ENCODE measurements at regions of chr1 and their contacts with region 1.

Region 1: GRCh38 chr1:19582302-19582701 is 61.8 kb upstream of the NBL1 start:
- DNase-seq: peak; percentile 89
- H3K4me3 Mint-ChIP-seq: no peak overlapping the region
- H3K27ac Mint-ChIP-seq: no peak overlapping the region
- H3K4me1 Mint-ChIP-seq: peaks cover 11% of the 10 kb centered on the region
- H3K27me3 Mint-ChIP-seq: no peaks in the 10 kb centered on the region

Region 2: DNA sequence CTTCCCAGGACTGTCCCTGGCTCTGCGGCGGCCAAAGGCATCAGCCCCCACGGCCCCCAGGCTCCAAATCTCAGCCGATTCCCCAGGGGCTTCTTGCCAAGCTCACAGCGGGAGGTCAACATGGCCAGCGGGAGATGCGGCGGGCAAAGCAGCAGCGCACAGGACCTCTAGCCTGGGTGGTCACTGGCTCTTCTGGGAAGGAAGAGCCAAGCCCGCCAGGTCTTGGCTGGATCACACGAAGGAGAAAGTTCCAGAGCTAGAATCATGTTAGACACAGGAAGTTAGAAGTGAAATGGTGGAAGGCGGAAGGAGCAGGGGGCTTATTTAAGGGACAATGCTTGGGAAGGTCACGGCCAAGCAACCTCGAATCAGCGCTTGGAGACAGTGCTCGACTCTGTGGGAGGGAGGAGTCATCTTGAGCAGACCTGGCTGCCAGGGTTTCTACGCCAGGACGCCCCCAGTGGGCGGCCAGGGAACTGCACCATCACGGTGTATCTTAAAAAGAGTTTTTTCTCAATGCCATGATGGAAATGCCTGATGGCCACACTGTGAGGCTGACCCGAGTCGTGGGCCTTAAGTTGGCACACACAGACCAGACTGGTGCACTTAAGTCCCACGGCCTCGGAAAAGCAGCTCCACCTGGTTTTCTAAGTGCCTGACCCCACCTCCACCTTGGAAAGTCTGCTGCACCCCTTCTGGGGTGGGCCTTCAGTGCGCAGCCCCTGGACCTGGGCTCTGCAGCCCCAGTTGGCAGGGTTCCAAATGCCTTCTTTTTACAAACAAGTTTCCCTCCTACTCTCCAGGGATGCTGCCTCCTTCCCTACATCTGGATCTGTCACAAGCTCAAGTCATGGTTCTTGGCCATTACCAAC is 240.9 kb before region 1 on chr1:
- CTCF ChIA-PET with region 1: interaction called, 7 read pairs
- intact Hi-C with region 1: loop called (anchors 1 kb)
- DNase-seq: peak; percentile 86
- H3K4me3 Mint-ChIP-seq: no peak overlapping the region
- H3K27ac Mint-ChIP-seq: no peak overlapping the region
- H3K4me1 Mint-ChIP-seq: peaks cover 10% of the 10 kb centered on the region
- H3K27me3 Mint-ChIP-seq: no peaks in the 10 kb centered on the region

Region 3: DNA sequence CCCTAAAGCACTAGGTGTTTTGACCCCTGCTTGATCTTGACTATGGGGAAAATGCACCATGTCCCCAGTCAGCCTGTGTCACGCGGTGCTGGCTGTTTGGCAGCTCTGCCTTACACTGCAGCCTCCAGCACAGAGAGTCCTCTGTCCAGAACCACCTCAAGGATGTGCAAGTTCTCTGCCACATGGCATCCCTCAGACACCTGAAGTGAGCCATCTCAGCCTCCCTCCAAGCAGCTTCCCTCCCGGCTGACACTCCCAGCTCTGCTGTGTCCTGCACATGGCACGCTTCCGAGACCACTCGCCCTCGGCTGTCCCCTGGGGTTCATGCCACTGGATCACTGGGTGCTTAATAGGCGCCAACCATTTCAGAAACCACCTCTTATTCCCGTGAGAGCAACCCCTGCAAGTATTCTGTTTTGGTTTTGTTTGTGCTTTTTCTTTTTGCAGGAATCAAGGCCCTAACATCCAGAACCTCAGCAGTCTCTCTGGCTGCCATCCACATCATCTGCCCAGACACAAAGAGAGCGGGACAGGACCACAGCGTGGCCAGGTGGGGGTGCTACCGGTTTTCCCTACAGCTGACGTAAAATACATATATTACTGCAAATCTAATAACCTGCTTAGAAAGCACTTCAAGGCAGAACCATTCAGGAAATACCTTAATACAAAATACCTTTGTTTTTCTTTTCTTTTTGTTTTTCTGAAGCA is 142.7 kb before region 1 on chr1:
- CTCF ChIA-PET with region 1: interaction called, 26 read pairs
- intact Hi-C with region 1: loop called (anchors 2 kb)
- DNase-seq: peak; percentile 67
- H3K4me3 Mint-ChIP-seq: no peak overlapping the region
- H3K27ac Mint-ChIP-seq: peak overlapping the region; percentile 21
- H3K4me1 Mint-ChIP-seq: peaks cover 86% of the 10 kb centered on the region
- H3K27me3 Mint-ChIP-seq: no peaks in the 10 kb centered on the region